ENCODE measurements at regions of chr2 and their contacts with region 1.

Region 1: DNA sequence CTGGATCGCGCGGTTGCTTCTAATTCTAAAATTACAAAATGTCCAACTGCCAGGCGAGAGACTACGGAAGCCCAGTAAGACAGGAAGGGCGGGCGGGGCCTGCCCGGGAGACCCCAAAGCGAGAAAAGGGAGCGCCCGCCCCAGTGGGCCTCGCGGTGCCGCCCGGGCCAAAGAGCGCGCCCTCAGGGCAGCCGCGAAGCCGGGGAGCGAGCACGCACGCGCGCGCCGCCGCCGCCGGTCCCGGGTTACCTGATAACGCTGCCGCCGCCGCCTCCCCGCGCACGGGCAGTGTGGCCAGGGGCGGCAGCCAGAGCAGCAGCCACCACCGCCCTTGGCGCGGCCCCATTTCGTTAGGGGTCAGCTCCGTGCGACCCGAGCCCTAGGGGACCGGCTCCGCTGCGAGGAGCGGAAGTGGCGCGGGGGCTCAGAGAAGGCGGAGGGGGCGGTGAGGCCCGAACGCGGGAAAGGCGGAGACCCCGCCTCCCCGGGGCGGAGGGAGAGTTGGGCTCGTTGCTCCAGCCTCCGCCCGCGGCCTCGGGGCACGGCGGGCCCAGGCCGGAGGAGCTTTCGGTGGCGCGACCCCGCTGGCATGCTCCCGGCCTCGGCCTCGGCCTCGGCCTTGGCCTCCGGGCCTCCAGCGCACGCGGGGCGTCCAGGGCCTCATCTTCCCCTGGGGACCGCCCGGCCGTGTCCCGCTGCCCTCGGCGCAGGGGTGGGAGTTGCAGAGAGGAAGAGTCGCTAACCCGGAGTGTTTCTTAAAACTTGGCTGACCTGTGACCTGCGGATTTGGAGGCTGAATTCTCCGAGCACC is at the start of gene NEMP2:
- DNase-seq: peak; percentile 53 to 91 (median 76)
- ATAC-seq: peak; percentile 59
- H3K4me3 ChIP-seq: peak within 1 kb of the TSS; percentile 77
- H3K4me3 Mint-ChIP-seq: peak within 1 kb of the TSS; percentile 94
- H3K27ac ChIP-seq: peak within 1 kb of the TSS; percentile 87 to 95
- H3K27ac Mint-ChIP-seq: peak within 1 kb of the TSS; percentile 99
- H3K4me1 ChIP-seq: peaks cover 40% of the 10 kb centered on the region
- H3K4me1 Mint-ChIP-seq: peaks cover 73% of the 10 kb centered on the region
- H3K27me3 ChIP-seq: no peaks in the 10 kb centered on the region
- H3K27me3 Mint-ChIP-seq: no peaks in the 10 kb centered on the region
- CTCF ChIP-seq: no peak
- total RNA-seq, gene NEMP2: 11.6 to 12.2 TPM

Region 2: DNA sequence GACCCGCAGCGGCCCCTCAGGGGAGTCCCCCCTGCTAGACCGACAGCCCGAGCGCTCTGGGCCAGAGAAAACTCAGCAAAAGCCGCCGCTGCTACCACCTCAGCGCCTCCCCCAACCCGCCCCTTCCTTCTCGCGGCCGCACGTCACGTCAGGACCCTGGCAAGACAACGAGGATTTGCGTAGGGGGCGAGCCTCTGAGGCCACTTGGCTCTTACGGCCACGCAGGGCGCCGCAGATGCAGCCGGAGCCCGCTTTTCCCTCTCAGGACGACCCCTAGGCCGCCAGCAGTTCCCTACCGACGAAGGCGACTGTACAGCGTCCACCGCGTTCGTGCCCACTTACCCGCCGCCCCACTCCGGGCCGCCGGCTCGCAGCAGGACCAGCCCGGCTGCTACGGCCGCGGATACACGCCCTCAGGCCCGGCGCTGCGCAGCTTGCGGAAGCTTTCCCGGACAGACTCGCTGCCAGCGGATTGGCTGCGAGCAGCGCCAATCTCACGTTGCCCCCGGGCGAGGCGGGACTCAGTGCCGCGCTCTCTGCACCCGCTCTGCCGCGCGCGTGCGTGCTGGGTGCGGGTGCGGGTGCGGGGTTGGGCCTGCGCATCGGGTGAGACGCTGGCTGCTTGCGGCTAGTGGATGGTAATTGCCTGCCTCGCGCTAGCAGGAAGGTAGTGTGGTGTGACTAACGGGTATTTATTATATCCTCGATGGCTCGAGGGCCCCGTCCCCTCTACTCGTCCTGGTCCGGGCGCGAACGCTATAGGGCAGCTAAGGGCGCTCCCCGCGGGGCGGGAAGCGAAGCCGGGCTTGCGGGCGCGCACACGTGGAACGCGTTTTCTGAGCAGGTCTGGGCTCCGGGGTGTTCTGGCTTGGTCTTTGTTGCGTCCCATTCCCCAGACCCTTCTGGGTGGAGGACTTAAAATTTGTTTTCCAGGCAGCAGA is 750.3 kb before region 1 on chr2 and contains the starts of genes ORMDL1 and PMS1:
- CTCF ChIA-PET with region 1: no interaction called
- POLR2A ChIA-PET with region 1: interaction called, 3 read pairs
- intact Hi-C with region 1: loop called in 1 of 2 experiments (anchors 10 kb)
- DNase-seq: peak; percentile 84 to 98 (median 92)
- ATAC-seq: peak; percentile 91
- H3K4me3 ChIP-seq: peak within 1 kb of the TSS; percentile 84
- H3K4me3 Mint-ChIP-seq: peak within 1 kb of the TSS; percentile 99
- H3K27ac ChIP-seq: peak within 1 kb of the TSS; percentile 90 to 93
- H3K27ac Mint-ChIP-seq: peak within 1 kb of the TSS; percentile 99
- H3K4me1 ChIP-seq: peaks cover 23% of the 10 kb centered on the region
- H3K4me1 Mint-ChIP-seq: peaks cover 58% of the 10 kb centered on the region
- H3K27me3 ChIP-seq: no peaks in the 10 kb centered on the region
- H3K27me3 Mint-ChIP-seq: no peaks in the 10 kb centered on the region
- CTCF ChIP-seq: no peak
- total RNA-seq, gene ORMDL1: 104 to 106 TPM
- total RNA-seq, gene PMS1: 9.6 to 9.8 TPM

Region 3: DNA sequence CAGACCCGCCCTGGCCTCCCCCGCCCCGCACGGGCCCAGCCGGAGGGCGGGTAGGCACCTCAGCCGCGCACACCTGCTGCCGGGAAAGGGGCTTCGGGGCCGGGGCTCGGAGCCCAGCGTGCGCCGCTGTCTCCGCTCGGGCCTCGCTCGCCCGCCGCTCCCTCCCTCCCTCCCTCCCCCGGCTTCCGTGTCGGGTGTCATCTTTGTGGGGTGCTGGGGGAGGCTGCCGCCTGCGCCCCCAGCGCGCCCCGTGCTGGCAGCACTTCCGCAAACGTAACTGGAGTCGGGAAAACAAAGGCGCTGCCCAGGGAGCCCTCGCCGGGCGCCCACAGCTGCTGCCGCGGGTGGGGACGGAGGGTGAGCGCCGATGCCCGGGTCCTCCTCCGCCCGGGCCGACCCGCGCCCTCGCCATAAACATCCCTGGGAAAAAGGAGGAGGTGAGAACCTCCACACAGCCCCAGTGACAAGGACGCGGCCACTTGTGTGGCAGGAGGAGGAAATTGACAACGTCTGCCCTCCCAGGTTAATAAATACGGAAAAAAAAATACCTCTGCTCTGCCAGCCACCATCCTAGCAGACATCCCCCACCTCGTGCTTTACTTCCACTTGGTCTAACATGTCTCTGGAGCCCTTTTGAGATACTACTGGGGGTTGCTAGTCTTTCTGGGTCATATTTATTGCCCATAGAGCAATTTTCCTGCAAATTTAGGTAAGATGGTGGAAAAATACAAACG is 125.8 kb before region 1 on chr2:
- CTCF ChIA-PET with region 1: no interaction called
- POLR2A ChIA-PET with region 1: interaction called, 100 read pairs
- intact Hi-C with region 1: loop called (anchors 2 to 5 kb)
- DNase-seq: peak; percentile 61 to 91 (median 72)
- ATAC-seq: peak; percentile 49
- H3K4me3 ChIP-seq: peak overlapping the region; percentile 79
- H3K4me3 Mint-ChIP-seq: peak overlapping the region; percentile 94
- H3K27ac ChIP-seq: peak overlapping the region; percentile 95 to 99
- H3K27ac Mint-ChIP-seq: peak overlapping the region; percentile 97
- H3K4me1 ChIP-seq: peaks cover 40% of the 10 kb centered on the region
- H3K4me1 Mint-ChIP-seq: peaks cover 45% of the 10 kb centered on the region
- H3K27me3 ChIP-seq: no peaks in the 10 kb centered on the region
- H3K27me3 Mint-ChIP-seq: no peaks in the 10 kb centered on the region
- CTCF ChIP-seq: no peak

Region 4: DNA sequence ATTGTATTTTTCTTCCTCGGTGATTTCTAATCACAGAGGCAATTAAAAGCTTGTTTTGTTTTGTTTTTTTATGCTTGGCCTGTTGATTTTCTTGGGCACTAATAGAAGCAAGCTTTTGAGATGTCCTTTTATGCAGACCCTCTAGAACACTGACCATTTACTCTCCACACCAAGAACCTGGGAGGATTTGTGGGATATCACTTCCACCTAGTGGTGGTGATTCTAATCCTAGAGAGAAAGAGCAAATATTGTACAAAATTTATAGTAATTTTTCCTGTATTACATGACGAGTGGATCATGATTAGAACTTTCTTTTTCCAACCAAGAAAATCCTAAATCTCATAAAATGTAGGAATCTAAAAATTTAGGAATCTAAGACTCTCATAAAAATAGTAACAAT is 23.4 kb before region 1 on chr2:
- CTCF ChIA-PET with region 1: no interaction called
- POLR2A ChIA-PET with region 1: interaction called, 49 read pairs
- intact Hi-C with region 1: loop called in 1 of 2 experiments (anchors 2 kb)
- DNase-seq: no peak
- ATAC-seq: no peak
- H3K4me3 ChIP-seq: no peak overlapping the region
- H3K4me3 Mint-ChIP-seq: no peak overlapping the region
- H3K27ac ChIP-seq: no peak overlapping the region
- H3K27ac Mint-ChIP-seq: no peak overlapping the region
- H3K4me1 ChIP-seq: peaks cover under 1% of the 10 kb centered on the region
- H3K4me1 Mint-ChIP-seq: peaks cover 21% of the 10 kb centered on the region
- H3K27me3 ChIP-seq: no peaks in the 10 kb centered on the region
- H3K27me3 Mint-ChIP-seq: no peaks in the 10 kb centered on the region
- CTCF ChIP-seq: no peak

Region 5: DNA sequence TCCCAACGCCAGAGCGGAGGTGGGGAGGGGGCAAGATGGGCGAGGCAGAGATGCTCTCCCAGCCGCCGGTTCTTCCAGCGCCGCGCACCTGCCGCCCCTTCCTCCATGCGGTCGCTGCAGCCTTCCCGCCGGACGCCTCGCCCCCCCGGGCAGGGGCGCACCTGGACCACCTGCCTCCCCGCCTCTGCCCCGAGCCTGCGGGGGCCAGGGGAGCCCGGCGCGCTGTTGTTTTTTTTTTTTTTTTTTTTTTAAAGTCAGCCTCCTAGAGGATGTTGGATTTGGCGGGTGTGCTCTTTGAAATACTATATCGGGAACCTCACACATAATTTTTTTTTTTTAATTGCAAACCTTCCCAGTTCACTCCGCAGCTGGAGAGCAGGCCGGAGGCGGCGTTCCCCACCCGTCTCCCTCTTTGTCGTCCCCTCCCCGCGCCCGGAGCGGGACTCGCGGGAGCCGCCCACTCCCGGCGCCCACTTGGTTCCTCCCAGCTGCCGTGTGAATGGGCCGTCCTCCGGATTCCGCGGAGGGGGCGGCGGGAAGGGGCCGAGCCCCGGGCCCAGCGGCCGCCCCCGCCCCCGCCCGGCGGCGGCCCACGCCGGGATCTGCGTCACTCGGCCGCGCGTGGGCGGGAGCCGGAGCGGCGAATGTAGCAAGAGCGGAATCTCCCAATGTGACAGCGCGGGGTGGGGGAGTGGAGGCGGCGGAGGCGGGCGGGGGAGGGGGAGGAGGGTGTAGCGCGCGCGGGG is 113.9 kb after region 1 on chr2:
- CTCF ChIA-PET with region 1: interaction called, 3 read pairs
- POLR2A ChIA-PET with region 1: interaction called, 26 read pairs
- intact Hi-C with region 1: loop called (anchors 5 kb)
- DNase-seq: peak; percentile 82 to 98 (median 89)
- ATAC-seq: peak; percentile 77
- H3K4me3 ChIP-seq: peak overlapping the region; percentile 71
- H3K4me3 Mint-ChIP-seq: peak overlapping the region; percentile 92
- H3K27ac ChIP-seq: peak overlapping the region; percentile 83
- H3K27ac Mint-ChIP-seq: peak overlapping the region; percentile 93
- H3K4me1 ChIP-seq: peaks cover 20% of the 10 kb centered on the region
- H3K4me1 Mint-ChIP-seq: peaks cover 57% of the 10 kb centered on the region
- H3K27me3 ChIP-seq: no peaks in the 10 kb centered on the region
- H3K27me3 Mint-ChIP-seq: no peaks in the 10 kb centered on the region
- CTCF ChIP-seq: no peak

Region 6: DNA sequence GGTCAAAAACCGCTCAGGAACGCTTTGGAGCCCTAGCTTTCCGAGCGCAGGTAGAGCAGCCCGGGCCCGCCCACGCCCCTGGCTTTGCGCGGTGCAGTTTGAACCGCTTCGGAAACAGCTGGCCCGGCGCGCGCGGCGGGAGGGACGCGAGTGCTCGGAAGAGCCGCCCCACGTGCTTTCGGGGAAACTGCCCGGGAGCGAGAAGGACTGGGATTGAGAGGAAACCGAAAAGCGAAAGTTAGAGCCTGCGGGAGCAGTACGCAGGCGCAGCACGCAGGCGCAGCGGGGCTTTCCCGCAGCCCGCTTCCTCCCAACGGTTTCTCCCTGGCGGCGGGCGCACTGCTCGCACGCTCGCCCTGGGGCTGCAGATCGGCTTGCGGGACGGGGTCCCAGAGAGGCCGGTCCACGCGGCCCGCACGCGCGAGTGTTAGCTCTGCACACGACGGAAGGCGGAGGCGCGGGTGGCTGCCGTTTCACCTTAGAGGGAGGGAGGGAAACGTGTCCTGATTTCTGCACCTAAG is 485.8 kb after region 1 on chr2:
- CTCF ChIA-PET with region 1: no interaction called
- POLR2A ChIA-PET with region 1: interaction called, 3 read pairs
- intact Hi-C with region 1: loop called in 1 of 2 experiments (anchors 10 kb)
- DNase-seq: peak; percentile 84 to 98 (median 92)
- ATAC-seq: peak; percentile 73
- H3K4me3 ChIP-seq: peak overlapping the region; percentile 82
- H3K4me3 Mint-ChIP-seq: no peak overlapping the region
- H3K27ac ChIP-seq: peak overlapping the region; percentile 84 to 87
- H3K27ac Mint-ChIP-seq: no peak overlapping the region
- H3K4me1 ChIP-seq: peaks cover 54% of the 10 kb centered on the region
- H3K4me1 Mint-ChIP-seq: peaks cover 32% of the 10 kb centered on the region
- H3K27me3 ChIP-seq: no peaks in the 10 kb centered on the region
- H3K27me3 Mint-ChIP-seq: no peaks in the 10 kb centered on the region
- CTCF ChIP-seq: no peak

Region 7: GRCh38 chr2:191078165-191078867 is 543.8 kb after region 1 on chr2:
- CTCF ChIA-PET with region 1: no interaction called
- POLR2A ChIA-PET with region 1: no interaction called
- intact Hi-C with region 1: no loop called
- DNase-seq: no peak
- ATAC-seq: no peak
- H3K4me3 ChIP-seq: no peak overlapping the region
- H3K4me3 Mint-ChIP-seq: no peak overlapping the region
- H3K27ac ChIP-seq: no peak overlapping the region
- H3K27ac Mint-ChIP-seq: peak overlapping the region; percentile 50
- H3K4me1 ChIP-seq: no peaks in the 10 kb centered on the region
- H3K4me1 Mint-ChIP-seq: peaks cover 20% of the 10 kb centered on the region
- H3K27me3 ChIP-seq: no peaks in the 10 kb centered on the region
- H3K27me3 Mint-ChIP-seq: no peaks in the 10 kb centered on the region
- CTCF ChIP-seq: no peak

Region 8: GRCh38 chr2:191231995-191232394 is 697.5 kb after region 1 on chr2:
- CTCF ChIA-PET with region 1: no interaction called
- POLR2A ChIA-PET with region 1: no interaction called
- intact Hi-C with region 1: no loop called
- DNase-seq: no peak
- ATAC-seq: no peak
- H3K4me3 ChIP-seq: no peak overlapping the region
- H3K4me3 Mint-ChIP-seq: no peak overlapping the region
- H3K27ac ChIP-seq: no peak overlapping the region
- H3K27ac Mint-ChIP-seq: no peak overlapping the region
- H3K4me1 ChIP-seq: no peaks in the 10 kb centered on the region
- H3K4me1 Mint-ChIP-seq: no peaks in the 10 kb centered on the region
- H3K27me3 ChIP-seq: no peaks in the 10 kb centered on the region
- H3K27me3 Mint-ChIP-seq: no peaks in the 10 kb centered on the region
- CTCF ChIP-seq: no peak

Region 9: GRCh38 chr2:191878576-191879279 is 1344.2 kb after region 1 on chr2:
- CTCF ChIA-PET with region 1: no interaction called
- POLR2A ChIA-PET with region 1: no interaction called
- intact Hi-C with region 1: no loop called
- DNase-seq: no peak
- ATAC-seq: no peak
- H3K4me3 ChIP-seq: no peak overlapping the region
- H3K4me3 Mint-ChIP-seq: no peak overlapping the region
- H3K27ac ChIP-seq: no peak overlapping the region
- H3K27ac Mint-ChIP-seq: no peak overlapping the region
- H3K4me1 ChIP-seq: no peaks in the 10 kb centered on the region
- H3K4me1 Mint-ChIP-seq: no peaks in the 10 kb centered on the region
- H3K27me3 ChIP-seq: peaks cover 0 to 6% of the 10 kb centered on the region in 2 experiments
- H3K27me3 Mint-ChIP-seq: peaks cover 3% of the 10 kb centered on the region
- CTCF ChIP-seq: no peak

Measured in CD4-positive, alpha-beta T cell (primary cell).